PC-9 (cell line): ENCODE measurements at regions of chr10 and their contacts with region 1.

Region 1: DNA sequence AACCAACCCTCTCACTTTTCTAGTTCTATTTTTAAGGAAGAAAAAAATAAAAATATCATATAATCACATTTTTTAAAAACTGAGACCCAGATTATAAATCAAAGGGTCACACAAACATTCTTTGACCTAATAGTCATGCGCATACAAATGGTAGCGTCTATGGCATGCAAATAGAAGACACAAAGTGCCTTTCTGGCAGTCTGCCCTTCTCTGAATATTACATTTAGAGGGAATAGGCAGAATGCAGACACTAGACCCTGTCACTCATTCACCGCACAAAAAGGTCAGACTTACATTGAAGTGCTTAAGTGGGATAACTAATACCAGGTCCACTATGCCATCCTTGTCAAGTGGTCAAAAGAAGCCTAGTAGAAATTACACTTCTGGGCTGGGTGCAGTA is 26.5 kb upstream of the FHIP2A start:
- DNase-seq: no peak
- H3K4me3 ChIP-seq: no peak overlapping the region
- H3K27ac ChIP-seq: no peak overlapping the region
- H3K4me1 ChIP-seq: no peaks in the 10 kb centered on the region
- H3K27me3 ChIP-seq: no peaks in the 10 kb centered on the region
- CTCF ChIP-seq: no peak

Region 2: GRCh38 chr10:114486938-114487814 is 307.9 kb before region 1 on chr10:
- CTCF ChIA-PET with region 1: interaction called, 22 read pairs
- POLR2A ChIA-PET with region 1: no interaction called
- intact Hi-C with region 1: no loop called
- DNase-seq: peak in 1 of 2 experiments; percentile 45
- H3K4me3 ChIP-seq: no peak overlapping the region
- H3K27ac ChIP-seq: peak overlapping the region; percentile 37; the same call in 1 of the 2 replicates
- H3K4me1 ChIP-seq: peaks cover 8% of the 10 kb centered on the region
- H3K27me3 ChIP-seq: no peaks in the 10 kb centered on the region
- CTCF ChIP-seq: no peak

Region 3: GRCh38 chr10:115129752-115130151 is 334.7 kb after region 1 on chr10:
- CTCF ChIA-PET with region 1: no interaction called
- POLR2A ChIA-PET with region 1: no interaction called
- intact Hi-C with region 1: loop called (anchors 10 kb)
- DNase-seq: no peak
- H3K4me3 ChIP-seq: no peak overlapping the region
- H3K27ac ChIP-seq: no peak overlapping the region
- H3K4me1 ChIP-seq: no peaks in the 10 kb centered on the region
- H3K27me3 ChIP-seq: no peaks in the 10 kb centered on the region
- CTCF ChIP-seq: peak; percentile 50